Thyroid gland (tissue), 4 donors: ENCODE measurements at regions of chr6 and their contacts with region 1.

Region 1: GRCh38 chr6:34055223-34055933 is 90.5 kb downstream of the GRM4 start:
- DNase-seq: peak; percentile 67 to 77
- H3K4me3 ChIP-seq: no peak overlapping the region
- H3K27ac ChIP-seq: no peak overlapping the region
- H3K4me1 ChIP-seq: peaks cover 4 to 15% of the 10 kb centered on the region in 2 donors
- H3K27me3 ChIP-seq: no peaks in the 10 kb centered on the region
- CTCF ChIP-seq: peak; percentile 33 to 80 (median 69)
- POLR2A ChIP-seq: no peak

Region 2: GRCh38 chr6:34145161-34146020 is 90.0 kb after region 1 on chr6:
- intact Hi-C with region 1: loop called (anchors 5 kb)
- DNase-seq: peak; percentile 21 to 22
- H3K4me3 ChIP-seq: no peak overlapping the region
- H3K27ac ChIP-seq: no peak overlapping the region
- H3K4me1 ChIP-seq: peaks cover 13 to 27% of the 10 kb centered on the region in 2 donors
- H3K27me3 ChIP-seq: peaks cover 26% of the 10 kb centered on the region
- CTCF ChIP-seq: no peak
- POLR2A ChIP-seq: no peak